Ascending aorta (tissue), 2 donors: ENCODE measurements at regions of chr11 and their contacts with region 1.

Region 1: GRCh38 chr11:65615229-65615941 is at the start of gene PCNX3:
- DNase-seq: peak; percentile 100
- H3K4me3 ChIP-seq: peak within 1 kb of the TSS; percentile 95 to 99
- H3K27ac ChIP-seq: peak within 1 kb of the TSS; percentile 90 to 95
- H3K4me1 ChIP-seq: peaks cover 21 to 35% of the 10 kb centered on the region in 2 donors
- H3K27me3 ChIP-seq: no peaks in the 10 kb centered on the region
- CTCF ChIP-seq: no peak
- total RNA-seq, gene PCNX3: 181 TPM

Region 2: DNA sequence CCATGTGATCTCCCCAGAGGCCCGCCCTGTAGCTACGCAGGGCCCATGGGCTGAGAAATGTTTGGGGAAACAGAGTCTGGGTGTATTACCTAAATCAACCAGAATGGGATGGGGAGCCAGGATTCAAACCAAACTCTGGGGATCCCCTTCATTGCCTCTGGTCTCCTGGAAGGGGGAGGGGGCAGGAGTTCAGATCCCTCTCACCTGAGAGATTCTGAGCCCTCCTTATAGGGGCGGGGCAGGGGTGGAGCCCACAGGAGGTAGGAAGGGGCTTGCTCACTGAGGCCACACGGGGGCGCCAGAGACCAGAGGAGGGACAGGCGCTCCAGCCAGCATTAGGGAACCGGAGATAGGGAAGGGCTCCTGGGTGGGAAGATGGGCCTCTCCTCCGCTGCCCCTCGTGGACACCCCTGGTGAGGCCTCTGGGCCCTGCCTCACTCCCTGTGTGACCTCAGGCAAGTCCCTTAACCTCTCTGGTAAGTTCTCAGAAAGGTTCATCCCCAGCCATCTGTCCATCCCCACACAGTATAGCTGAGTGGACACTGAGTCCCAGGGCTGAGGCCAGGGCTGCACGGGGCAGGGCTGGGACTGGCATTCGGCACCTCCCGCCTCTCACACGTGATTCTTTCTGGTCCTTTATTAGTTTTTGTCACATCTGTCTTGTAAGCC is 768.3 kb before region 1 on chr11:
- intact Hi-C with region 1: no loop called
- DNase-seq: peak in 1 of 2 donors; percentile 94
- H3K4me3 ChIP-seq: no peak overlapping the region
- H3K27ac ChIP-seq: no peak overlapping the region
- H3K4me1 ChIP-seq: peaks cover 16 to 17% of the 10 kb centered on the region in 2 donors
- H3K27me3 ChIP-seq: no peaks in the 10 kb centered on the region
- CTCF ChIP-seq: peak; percentile 97 to 98 (median 98)

Region 3: GRCh38 chr11:65524741-65525545 is 90.4 kb before region 1 on chr11 and contains the start of gene SCYL1:
- intact Hi-C with region 1: loop called (anchors 5 kb)
- DNase-seq: peak in 1 of 2 donors; percentile 86
- H3K4me3 ChIP-seq: peak within 1 kb of the TSS; percentile 70 to 90
- H3K27ac ChIP-seq: peak within 1 kb of the TSS; percentile 83 to 95
- H3K4me1 ChIP-seq: peaks cover 16 to 18% of the 10 kb centered on the region in 2 donors
- H3K27me3 ChIP-seq: no peaks in the 10 kb centered on the region
- CTCF ChIP-seq: no peak
- total RNA-seq, gene SCYL1: 220 TPM

Region 4: GRCh38 chr11:65569973-65570918 is 45.1 kb before region 1 on chr11 and contains the start of gene ZNRD2:
- intact Hi-C with region 1: loop called (anchors 1 kb)
- DNase-seq: peak; percentile 95 to 99
- H3K4me3 ChIP-seq: peak within 1 kb of the TSS; percentile 95 to 98
- H3K27ac ChIP-seq: peak within 1 kb of the TSS; percentile 90 to 99
- H3K4me1 ChIP-seq: peaks cover 30 to 56% of the 10 kb centered on the region in 2 donors
- H3K27me3 ChIP-seq: no peaks in the 10 kb centered on the region
- CTCF ChIP-seq: peak; percentile 37 to 46 (median 45)
- total RNA-seq, gene ZNRD2: 157 TPM

Region 5: DNA sequence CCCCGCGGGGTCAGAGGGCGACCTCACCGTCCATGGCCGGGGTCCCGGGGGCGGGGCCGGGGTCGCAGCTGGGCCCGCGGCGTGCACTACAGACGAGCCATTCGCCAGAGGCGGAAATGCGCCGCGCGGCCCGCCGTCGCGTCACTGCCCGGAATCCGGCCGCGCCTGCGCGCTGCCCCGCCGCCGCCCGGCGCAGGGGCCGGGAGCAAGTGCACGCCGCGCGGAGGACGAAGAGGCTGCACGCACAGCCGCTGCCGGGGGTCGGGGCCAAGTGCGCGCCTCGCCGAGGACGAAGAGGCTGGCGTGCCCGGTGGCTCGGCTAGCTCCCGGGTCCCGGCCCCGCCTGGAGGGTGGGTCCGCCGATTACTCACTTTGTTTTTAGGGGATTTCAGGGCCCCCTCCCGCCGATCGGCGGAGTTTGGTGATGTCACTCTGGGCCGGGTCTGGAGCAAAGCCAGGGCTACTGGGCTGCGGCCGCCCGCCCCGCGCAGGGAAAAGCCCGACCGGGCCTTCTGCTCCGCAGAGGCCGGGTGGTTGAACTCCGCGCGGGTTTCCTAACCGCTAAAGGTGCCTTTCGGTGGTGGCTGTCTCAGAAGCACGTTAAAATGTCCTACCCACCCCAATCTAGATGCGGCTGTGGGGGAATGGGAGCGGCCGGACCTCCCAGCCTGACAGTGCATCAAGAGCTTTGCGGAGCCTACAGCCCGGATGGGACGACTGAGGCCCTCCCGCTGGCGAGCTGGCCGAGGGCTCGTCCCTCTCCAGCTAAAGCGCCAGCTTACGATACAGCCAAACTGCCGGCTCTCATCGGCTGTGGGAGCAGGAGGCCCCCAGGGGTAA is 47.6 kb after region 1 on chr11 and contains the start of gene RELA:
- intact Hi-C with region 1: loop called (anchors 1 kb)
- DNase-seq: peak; percentile 83 to 97
- H3K4me3 ChIP-seq: peak within 1 kb of the TSS; percentile 95 to 99
- H3K27ac ChIP-seq: peak within 1 kb of the TSS; percentile 98
- H3K4me1 ChIP-seq: peaks cover 11 to 32% of the 10 kb centered on the region in 2 donors
- H3K27me3 ChIP-seq: no peaks in the 10 kb centered on the region
- CTCF ChIP-seq: peak in 1 of 3 experiments; percentile 20
- total RNA-seq, gene RELA: 115 TPM

Region 6: GRCh38 chr11:65833297-65834030 is 218.1 kb after region 1 on chr11 and contains the start of gene SNX32:
- intact Hi-C with region 1: loop called (anchors 5 kb)
- DNase-seq: peak; percentile 80 to 97
- H3K4me3 ChIP-seq: peak within 1 kb of the TSS; percentile 70 to 74
- H3K27ac ChIP-seq: no peak within 1 kb of the TSS
- H3K4me1 ChIP-seq: peaks cover 5 to 14% of the 10 kb centered on the region in 2 donors
- H3K27me3 ChIP-seq: no peaks in the 10 kb centered on the region
- CTCF ChIP-seq: no peak
- total RNA-seq, gene SNX32: not detected